Mucosa of descending colon (tissue), 3 donors: ENCODE measurements at regions of chr3 and their contacts with region 1.

Region 1: DNA sequence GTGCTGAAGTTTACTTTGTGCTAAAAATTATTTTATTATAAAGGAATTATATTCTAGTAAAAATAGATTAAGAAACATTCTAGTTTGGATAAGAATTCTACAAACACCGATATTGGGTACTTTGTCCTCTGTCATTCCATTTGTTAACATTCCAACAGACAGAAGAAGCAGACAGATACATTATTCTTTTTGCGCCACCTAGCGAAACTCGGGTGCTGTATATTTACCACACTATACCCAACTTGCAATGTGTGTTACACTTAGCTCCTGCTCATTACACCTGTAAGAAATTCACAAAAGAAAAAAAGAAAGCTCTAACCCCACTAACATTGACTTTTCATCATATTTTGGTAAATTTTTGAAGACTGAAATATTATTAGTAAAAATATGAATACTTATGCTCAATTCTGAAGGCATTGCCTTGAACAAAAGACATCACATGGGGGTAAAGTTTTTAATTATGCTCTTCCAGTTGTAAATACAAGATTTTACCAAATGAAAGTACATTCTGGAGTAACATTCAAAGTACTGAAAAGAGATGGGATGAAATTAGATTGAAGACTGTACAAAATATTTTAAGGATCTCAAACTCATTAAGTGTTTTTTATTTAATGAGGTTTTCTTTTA is 136.5 kb upstream of the MLF1 start:
- DNase-seq: peak in 2 of 3 donors; percentile 21 to 93
- ATAC-seq: peak; percentile 82
- H3K4me3 ChIP-seq: no peak overlapping the region
- H3K4me1 ChIP-seq: no peaks in the 10 kb centered on the region
- CTCF ChIP-seq: peak; percentile 33

Region 2: DNA sequence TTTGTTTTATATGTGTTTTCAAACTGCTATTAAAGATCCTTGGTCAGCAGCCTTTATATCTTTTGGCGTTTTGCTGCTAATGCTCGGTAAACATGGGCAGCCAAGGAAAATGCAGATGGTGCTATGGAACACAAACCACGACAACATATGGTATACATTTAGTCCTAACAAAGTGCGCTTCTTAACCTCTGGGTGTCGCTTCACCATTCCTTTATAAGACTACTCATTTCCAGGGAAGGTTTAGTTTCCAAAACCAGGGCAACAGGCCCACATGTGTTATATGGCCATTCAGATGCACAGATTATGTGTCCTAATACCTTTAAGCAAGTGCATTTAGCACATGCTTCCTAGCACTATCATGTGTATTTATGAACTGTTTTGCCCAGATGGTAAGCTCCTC is 343.0 kb before region 1 on chr3:
- intact Hi-C with region 1: loop called in 1 of 2 experiments (anchors 5 kb)
- DNase-seq: no peak
- ATAC-seq: no peak
- H3K4me3 ChIP-seq: no peak overlapping the region
- H3K4me1 ChIP-seq: no peaks in the 10 kb centered on the region
- CTCF ChIP-seq: no peak

Region 3: DNA sequence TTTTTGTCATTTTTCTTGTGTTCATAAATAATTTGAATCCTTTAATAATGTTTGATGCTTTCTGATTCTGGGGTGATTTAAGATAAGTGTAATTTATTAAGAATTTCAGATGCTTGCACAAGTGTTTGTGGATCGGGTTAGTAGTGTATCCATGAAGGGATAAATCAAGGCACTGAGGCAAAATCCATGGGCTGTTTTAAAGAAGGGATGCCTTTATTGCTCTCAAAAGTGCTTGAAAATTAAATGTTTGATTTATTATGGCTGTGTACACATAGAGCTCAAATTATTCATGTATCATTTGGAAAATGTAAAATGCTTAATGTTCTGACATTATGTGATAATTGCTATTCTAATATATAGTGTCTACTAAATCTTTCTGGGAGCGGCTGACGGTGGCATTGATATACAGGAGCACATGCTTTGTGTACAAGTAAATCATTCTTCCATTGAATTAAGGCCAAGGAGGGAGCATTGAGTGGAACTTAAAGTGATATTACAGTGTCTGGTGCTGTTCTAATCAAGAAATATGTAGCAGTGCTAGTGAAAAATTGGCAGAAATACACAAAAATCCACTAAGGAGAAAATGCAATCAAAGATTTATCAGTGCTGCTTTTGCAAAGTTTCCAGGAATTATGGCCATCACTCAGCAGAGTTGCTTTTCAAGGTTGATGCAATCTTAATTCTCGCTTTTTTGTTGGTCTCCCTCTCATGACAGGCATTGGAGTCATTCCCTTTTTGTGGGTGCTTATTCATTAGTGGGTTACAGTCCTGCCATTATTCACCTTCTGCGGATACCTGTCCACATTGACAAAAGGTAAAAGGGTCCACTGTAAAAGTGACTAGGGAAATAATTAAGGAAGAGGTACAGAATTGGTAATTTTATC is 548.9 kb after region 1 on chr3:
- intact Hi-C with region 1: no loop called
- DNase-seq: no peak
- ATAC-seq: no peak
- H3K4me3 ChIP-seq: no peak overlapping the region
- H3K4me1 ChIP-seq: no peaks in the 10 kb centered on the region
- CTCF ChIP-seq: no peak